Mammary epithelial cell (primary cell): ENCODE measurements at regions of chr2 and their contacts with region 1.

Region 1: DNA sequence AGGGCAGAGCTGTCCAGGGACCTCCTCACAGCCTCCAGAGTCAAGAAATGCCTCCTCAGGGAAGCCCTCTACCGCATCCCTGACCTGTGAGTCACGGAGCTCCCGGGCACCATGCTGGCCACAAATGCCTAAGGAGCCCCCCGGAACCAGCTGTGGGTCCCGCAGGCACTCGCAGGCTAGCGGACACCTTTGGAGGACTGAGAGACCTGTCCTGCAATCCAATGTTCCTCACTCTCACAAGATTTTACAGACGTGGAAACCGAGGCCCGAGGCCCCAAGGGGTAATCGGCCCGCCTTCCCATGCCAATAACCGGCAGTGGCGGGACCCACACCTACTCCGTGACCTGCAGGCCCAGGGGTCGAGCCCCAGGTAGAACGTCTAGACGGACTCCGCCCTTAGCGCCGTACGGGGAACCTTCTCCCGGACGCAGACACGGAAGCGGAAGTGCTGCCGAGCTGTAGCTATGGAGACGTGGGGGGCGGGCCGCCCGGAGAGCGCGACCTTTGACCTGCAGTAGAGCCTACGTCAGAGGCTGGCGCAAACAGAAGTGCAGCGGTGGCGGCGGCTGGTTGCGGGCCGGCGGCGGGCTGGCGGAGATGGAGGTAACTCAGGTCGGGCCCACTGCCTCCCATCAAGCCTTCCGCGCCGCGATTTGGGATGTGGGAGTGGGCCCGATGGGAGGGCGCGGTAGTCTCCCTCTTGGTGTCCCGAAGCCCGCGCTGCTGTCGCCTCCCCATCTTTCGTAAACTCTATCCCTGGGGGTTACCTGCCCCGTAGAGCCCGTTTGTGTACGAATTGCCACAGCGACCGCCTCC is at the start of gene GCC2:
- DNase-seq: peak; percentile 88
- H3K4me3 ChIP-seq: peak within 1 kb of the TSS; percentile 61 to 91 (median 87)
- H3K27ac ChIP-seq: peak within 1 kb of the TSS; percentile 75
- H3K4me1 ChIP-seq: peaks cover 28% of the 10 kb centered on the region
- H3K27me3 ChIP-seq: no peaks in the 10 kb centered on the region
- CTCF ChIP-seq: no peak
- total RNA-seq, gene GCC2: 20.8 to 31.5 TPM

Region 2: DNA sequence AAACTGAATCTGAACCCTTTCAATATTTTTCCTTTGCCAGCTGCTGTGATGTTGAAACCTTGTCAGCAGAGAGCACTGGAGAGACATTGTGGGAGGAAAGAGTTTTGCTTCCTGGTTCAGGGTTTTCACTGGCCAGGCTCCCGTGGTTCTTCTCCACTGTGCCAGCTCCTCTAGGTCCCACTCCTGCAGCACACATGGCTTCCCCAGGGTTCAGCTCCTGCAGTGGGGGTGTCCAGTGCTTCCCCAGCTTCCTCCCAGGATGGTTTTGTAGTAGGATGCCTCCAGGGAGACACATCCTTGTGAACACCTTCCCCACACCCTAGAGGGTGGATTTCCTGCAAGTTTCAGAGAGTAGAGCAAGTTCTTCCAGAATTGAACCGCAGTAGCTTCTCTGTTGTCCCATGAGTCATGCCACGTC is 233.1 kb before region 1 on chr2:
- CTCF ChIA-PET with region 1: no interaction called
- dilution Hi-C with region 1: no loop called
- in situ Hi-C with region 1: no loop called
- intact Hi-C with region 1: loop called (anchors 5 kb)
- DNase-seq: peak; percentile 64
- H3K4me3 ChIP-seq: no peak overlapping the region
- H3K27ac ChIP-seq: no peak overlapping the region
- H3K4me1 ChIP-seq: peaks cover 3% of the 10 kb centered on the region
- H3K27me3 ChIP-seq: no peaks in the 10 kb centered on the region
- CTCF ChIP-seq: peak; percentile 33 to 59

Region 3: DNA sequence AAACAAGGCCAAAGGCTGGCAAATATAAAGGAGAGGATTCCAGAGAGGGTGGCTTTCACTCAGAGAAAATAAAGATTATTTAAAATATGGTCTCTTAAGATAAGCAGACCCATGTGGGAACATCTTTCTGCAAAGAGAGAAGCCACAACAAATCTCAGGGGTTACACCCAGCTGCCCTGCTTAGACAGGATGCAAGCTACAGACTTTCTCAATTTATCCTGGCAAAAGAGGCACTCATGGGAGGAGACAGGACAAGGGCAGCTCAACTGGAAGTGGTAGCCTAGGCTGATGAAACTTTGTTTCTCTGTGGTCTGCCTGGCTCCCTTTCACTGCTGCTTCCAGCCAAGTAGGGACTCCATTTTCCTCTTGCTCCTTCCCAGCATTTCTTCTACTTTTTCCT is 97.0 kb before region 1 on chr2:
- CTCF ChIA-PET with region 1: no interaction called
- dilution Hi-C with region 1: no loop called
- in situ Hi-C with region 1: no loop called
- intact Hi-C with region 1: loop called (anchors 1 kb)
- DNase-seq: no peak
- H3K4me3 ChIP-seq: no peak overlapping the region
- H3K27ac ChIP-seq: no peak overlapping the region
- H3K4me1 ChIP-seq: no peaks in the 10 kb centered on the region
- H3K27me3 ChIP-seq: no peaks in the 10 kb centered on the region
- CTCF ChIP-seq: no peak

Region 4: DNA sequence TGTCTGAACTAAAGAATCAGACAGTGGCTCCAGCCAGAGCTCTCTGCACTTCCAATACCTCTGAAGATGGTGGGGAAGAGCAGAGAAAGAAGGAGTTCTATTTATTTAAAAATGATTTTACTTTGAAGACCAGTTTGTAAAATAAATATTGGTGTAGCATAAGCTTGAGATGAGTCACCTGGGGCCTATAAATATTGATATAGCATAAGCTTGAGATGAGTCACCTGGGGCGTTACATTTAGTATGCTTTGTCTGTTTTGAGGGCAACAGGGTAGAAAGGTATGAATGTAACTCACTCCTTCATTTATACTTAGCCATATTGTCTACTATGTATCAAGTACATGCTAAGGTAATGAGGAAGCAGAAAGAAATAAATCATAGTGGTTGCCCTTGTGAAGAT is 78.8 kb before region 1 on chr2:
- CTCF ChIA-PET with region 1: no interaction called
- dilution Hi-C with region 1: no loop called
- in situ Hi-C with region 1: no loop called
- intact Hi-C with region 1: no loop called
- DNase-seq: no peak
- H3K4me3 ChIP-seq: no peak overlapping the region
- H3K27ac ChIP-seq: no peak overlapping the region
- H3K4me1 ChIP-seq: no peaks in the 10 kb centered on the region
- H3K27me3 ChIP-seq: no peaks in the 10 kb centered on the region
- CTCF ChIP-seq: no peak

Region 5: DNA sequence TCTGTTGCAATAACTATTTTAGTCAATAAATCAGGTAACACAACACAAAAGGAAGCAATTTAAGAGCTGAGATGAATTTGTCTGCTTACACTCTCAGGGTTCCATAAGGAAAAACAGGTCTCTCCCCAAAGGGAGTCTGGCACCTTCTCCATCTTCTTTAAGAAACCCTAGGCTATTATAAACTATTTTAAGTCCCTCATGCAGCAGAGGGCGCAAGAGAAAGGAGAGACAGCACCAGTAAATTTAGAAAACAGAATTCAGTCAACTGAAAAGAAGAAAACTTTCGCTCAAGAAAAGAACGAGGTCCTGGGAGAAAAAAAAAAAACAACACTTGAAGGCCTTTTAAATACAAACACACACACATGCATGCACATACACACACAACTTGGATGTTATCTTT is 52.0 kb before region 1 on chr2:
- CTCF ChIA-PET with region 1: no interaction called
- dilution Hi-C with region 1: no loop called
- in situ Hi-C with region 1: no loop called
- intact Hi-C with region 1: loop called (anchors 1 kb)
- DNase-seq: peak; percentile 39
- H3K4me3 ChIP-seq: no peak overlapping the region
- H3K27ac ChIP-seq: no peak overlapping the region
- H3K4me1 ChIP-seq: no peaks in the 10 kb centered on the region
- H3K27me3 ChIP-seq: no peaks in the 10 kb centered on the region
- CTCF ChIP-seq: peak; percentile 28 to 59

Region 6: GRCh38 chr2:108417255-108417654 is 31.6 kb before region 1 on chr2:
- CTCF ChIA-PET with region 1: no interaction called
- dilution Hi-C with region 1: no loop called
- in situ Hi-C with region 1: no loop called
- intact Hi-C with region 1: loop called (anchors 2 kb)
- DNase-seq: no peak
- H3K4me3 ChIP-seq: no peak overlapping the region
- H3K27ac ChIP-seq: no peak overlapping the region
- H3K4me1 ChIP-seq: peaks cover 24% of the 10 kb centered on the region
- H3K27me3 ChIP-seq: no peaks in the 10 kb centered on the region
- CTCF ChIP-seq: peak; percentile 2 to 37

Region 7: GRCh38 chr2:108719149-108720044 is 270.5 kb after region 1 on chr2 and contains the start of gene RANBP2:
- CTCF ChIA-PET with region 1: no interaction called
- dilution Hi-C with region 1: no loop called
- in situ Hi-C with region 1: no loop called
- intact Hi-C with region 1: loop called (anchors 1 kb)
- DNase-seq: peak; percentile 96
- H3K4me3 ChIP-seq: peak within 1 kb of the TSS; percentile 54 to 97 (median 76)
- H3K27ac ChIP-seq: peak within 1 kb of the TSS; percentile 84
- H3K4me1 ChIP-seq: peaks cover 7% of the 10 kb centered on the region
- H3K27me3 ChIP-seq: no peaks in the 10 kb centered on the region
- CTCF ChIP-seq: no peak
- total RNA-seq, gene RANBP2: 56.1 to 89.9 TPM